WTC11 (cell line): ENCODE measurements at regions of chr21 and their contacts with region 1.

Region 1: DNA sequence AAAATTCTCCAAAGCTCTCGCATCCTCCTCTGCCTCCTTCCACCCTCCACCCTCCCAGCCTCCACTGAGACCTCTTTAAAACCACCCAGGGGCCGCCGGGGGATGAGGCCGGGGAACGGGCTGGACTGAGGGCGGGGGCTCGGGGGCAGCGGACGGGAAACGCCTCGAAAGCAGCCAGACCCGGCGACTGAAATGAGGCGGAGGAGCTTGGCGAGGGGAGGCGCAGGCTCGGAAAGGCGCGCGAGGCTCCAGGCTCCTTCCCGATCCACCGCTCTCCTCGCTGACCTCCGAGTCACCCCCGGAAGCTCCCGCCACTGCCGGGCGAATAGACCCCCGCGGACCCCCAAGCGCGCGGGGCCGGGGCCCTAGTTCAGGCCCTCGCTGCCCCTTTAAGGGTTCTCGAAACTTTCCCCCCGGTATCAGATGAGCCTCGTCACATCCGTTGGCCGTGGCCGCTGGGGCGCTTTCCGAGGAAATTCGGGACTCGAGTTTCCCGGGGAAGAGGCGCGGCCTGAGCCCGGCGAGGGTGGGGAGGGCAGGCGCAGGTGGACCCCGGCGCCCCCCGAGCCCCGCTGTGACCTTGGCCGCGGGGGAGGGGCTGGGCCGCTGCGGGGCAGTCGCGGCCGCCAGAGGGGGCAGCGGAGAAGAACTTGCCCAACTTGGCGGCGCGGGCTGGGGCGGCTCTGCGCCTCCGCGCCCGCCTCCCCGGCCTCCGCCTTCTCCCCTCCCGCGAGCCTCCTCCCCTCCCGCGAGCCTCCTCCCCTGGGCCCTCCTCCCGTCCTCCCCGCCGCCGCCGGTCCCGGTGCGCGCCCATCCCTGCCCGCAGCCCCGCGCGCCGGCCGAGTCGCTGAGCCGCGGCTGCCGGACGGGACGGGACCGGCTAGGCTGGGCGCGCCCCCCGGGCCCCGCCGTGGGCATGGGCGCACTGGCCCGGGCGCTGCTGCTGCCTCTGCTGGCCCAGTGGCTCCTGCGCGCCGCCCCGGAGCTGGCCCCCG is at the start of gene BACE2:
- DNase-seq: peak; percentile 69
- ATAC-seq: peak; percentile 75
- H3K4me3 Mint-ChIP-seq: peak within 1 kb of the TSS; percentile 77
- H3K27ac Mint-ChIP-seq: no peak within 1 kb of the TSS
- H3K4me1 Mint-ChIP-seq: peaks cover 21% of the 10 kb centered on the region
- H3K27me3 Mint-ChIP-seq: peaks cover 50% of the 10 kb centered on the region
- CTCF ChIP-seq: no peak
- total RNA-seq, gene BACE2: 9.8 to 11.8 TPM (median 11.1 TPM) in 3 replicates

Region 2: DNA sequence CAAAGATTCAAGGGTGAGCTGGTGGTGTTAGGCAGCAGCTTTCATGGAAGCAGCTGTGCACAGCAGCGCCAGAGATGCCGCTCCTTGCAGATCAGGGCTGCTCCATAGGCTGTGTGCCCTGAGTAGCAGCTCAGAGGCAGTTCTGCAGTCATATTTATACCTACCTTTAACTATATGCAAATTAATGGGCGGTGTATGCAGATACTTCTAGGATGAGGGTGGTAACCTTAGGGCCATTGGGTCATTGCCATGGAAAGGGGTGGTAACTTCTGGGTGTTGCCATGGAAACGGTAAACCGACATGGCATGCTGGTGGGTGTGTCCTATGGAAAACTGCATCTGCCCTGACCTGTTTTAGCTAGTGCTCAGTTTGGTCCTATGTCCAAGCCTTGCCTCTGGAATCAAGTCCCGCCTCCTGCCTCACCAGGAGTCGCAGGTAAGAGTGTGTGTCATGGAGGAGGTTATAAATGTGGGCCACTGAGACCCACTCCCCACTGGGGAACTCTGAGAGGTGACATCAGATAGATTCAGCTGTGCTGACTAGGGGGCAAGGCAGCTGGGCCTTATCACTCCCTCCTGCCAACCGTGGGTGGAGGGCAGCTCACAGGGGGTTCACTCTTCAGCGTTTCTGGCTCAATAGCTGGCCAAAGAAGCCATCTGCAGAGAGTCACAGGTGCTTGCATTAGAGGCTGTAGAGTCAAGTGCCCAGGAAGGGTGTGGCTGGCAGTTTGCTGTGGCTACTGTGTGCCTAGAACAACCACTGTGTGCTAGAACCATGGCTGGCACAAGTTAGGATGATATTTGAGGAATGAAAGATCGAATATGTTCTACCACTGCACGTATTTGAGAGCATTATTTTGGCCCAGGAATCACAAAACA is 19.3 kb after region 1 on chr21:
- CTCF ChIA-PET with region 1: interaction called, 12 read pairs
- POLR2A ChIA-PET with region 1: no interaction called
- DNase-seq: peak; percentile 25
- ATAC-seq: peak; percentile 73
- H3K4me3 Mint-ChIP-seq: no peak overlapping the region
- H3K27ac Mint-ChIP-seq: no peak overlapping the region
- H3K4me1 Mint-ChIP-seq: peaks cover 11% of the 10 kb centered on the region
- H3K27me3 Mint-ChIP-seq: no peaks in the 10 kb centered on the region
- CTCF ChIP-seq: no peak

Region 3: DNA sequence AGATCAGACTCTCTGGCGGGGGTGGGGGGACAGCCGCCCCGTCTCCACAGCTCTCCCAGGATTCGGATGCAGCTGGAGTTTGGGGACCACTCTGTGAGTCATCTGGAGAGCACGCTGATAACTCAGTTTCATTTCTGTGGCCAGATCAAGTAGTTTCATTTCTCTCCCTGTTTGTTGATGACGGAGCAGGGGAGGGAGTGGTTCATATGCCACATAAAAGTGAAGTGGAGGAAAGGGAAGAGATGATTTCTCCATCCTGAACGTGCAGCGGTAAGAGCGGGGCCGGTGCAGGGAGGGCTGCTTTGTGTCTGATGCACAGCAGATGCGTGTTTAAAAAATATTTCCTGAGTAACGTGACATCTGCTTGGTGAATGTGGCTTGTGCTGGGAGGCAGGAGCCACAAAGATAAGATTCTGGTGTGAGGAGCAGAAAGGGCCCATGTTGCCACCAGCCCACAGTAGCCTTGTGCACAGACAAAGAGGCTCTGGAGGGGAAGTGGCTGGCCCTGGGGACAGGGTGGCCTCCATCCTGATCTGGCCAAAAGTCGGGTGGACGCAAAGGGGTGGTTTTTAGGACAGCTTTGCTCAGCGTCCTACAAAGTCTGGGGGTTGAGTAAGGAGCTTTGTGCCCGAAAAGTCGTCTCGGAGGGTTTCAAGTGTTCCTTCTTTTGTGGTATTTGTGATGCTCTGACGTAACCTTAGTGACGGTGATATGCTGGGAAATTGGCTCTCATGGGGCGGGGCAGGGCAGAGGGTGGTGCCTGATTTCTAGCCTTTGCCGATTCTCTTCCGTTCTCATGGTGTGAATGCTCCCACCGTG is 194.3 kb after region 1 on chr21 and contains the start of gene MX2:
- CTCF ChIA-PET with region 1: interaction called, 10 read pairs
- POLR2A ChIA-PET with region 1: no interaction called
- DNase-seq: no peak
- ATAC-seq: no peak
- H3K4me3 Mint-ChIP-seq: no peak within 1 kb of the TSS
- H3K27ac Mint-ChIP-seq: no peak within 1 kb of the TSS; the same call in 1 of the 2 replicates
- H3K4me1 Mint-ChIP-seq: peaks cover 18% of the 10 kb centered on the region
- H3K27me3 Mint-ChIP-seq: no peaks in the 10 kb centered on the region
- CTCF ChIP-seq: no peak
- total RNA-seq, gene MX2: 2.6 to 4.0 TPM (median 2.7 TPM) in 3 replicates